ENCODE measurements at regions of chr5 and their contacts with region 1.

Region 1: GRCh38 chr5:10701567-10702039 is 59.4 kb downstream of the DAP start:
- DNase-seq: no peak
- ATAC-seq: no peak
- H3K4me3 ChIP-seq: no peak overlapping the region
- H3K27ac ChIP-seq: no peak overlapping the region
- H3K4me1 ChIP-seq: peaks cover 44% of the 10 kb centered on the region
- H3K27me3 ChIP-seq: no peaks in the 10 kb centered on the region
- CTCF ChIP-seq: peak; percentile 39 to 66 (median 53); a peak in 5 of 6 replicates
- EP300 ChIP-seq: no peak
- POLR2A ChIP-seq: no peak
- RAD21 ChIP-seq: peak; percentile 47; the same call in 1 of the 2 replicates

Region 2: GRCh38 chr5:10684303-10685086 is 17.1 kb before region 1 on chr5:
- CTCF ChIA-PET with region 1: interaction called, 20 read pairs
- POLR2A ChIA-PET with region 1: no interaction called
- RAD21 ChIA-PET with region 1: interaction called, 4 read pairs
- SMC1A ChIA-PET with region 1: interaction called, 13 read pairs
- in situ Hi-C with region 1: no loop called
- intact Hi-C with region 1: no loop called
- DNase-seq: no peak
- ATAC-seq: peak; percentile 76
- H3K4me3 ChIP-seq: 0 out of 2 replicates have a peak overlapping the region, but pooled peaks have one; percentile 17
- H3K27ac ChIP-seq: peak overlapping the region; percentile 88
- H3K4me1 ChIP-seq: peaks cover 23% of the 10 kb centered on the region
- H3K27me3 ChIP-seq: no peaks in the 10 kb centered on the region
- CTCF ChIP-seq: no peak
- EP300 ChIP-seq: no peak
- POLR2A ChIP-seq: no peak
- RAD21 ChIP-seq: no peak

Region 3: DNA sequence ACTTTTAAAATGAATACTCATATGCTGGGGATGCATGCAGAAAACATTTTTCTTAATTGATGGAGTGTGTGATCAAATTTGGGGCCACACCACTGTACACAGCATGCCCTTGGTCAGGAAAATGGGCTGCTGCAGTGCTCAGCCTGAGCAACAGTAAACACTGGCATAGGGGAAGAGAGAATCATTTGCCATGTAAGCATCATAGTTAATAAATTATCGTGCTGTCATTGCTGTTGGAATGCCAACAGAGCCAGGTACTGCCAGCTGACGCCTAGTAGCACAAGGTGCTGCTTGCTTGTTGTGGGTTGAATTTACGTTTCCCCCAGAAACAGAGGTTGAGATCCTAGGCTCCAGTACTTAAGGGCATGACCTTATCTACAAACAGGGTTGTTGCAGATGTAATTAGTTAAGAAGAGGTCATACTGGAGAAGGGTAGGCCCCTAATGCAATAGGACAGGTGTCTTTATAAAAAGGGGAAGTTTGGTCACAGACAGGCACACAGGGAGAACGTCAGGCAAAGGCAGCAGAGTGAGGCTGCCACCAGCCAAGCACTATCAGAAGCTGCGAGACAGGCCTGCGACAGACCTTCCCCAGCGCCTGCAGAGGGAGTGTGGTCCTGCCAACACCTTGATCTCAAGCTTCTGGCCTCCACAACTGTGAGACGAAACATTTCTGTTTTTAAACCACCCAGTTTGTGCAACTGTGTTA is 34.1 kb after region 1 on chr5:
- CTCF ChIA-PET with region 1: interaction called, 20 read pairs
- POLR2A ChIA-PET with region 1: no interaction called
- RAD21 ChIA-PET with region 1: interaction called, 4 read pairs
- SMC1A ChIA-PET with region 1: interaction called, 4 read pairs
- in situ Hi-C with region 1: no loop called
- intact Hi-C with region 1: no loop called
- DNase-seq: no peak
- ATAC-seq: peak; percentile 73
- H3K4me3 ChIP-seq: no peak overlapping the region
- H3K27ac ChIP-seq: no peak overlapping the region
- H3K4me1 ChIP-seq: peaks cover 12% of the 10 kb centered on the region
- H3K27me3 ChIP-seq: no peaks in the 10 kb centered on the region
- CTCF ChIP-seq: peak; percentile 6 to 14 (median 13); a peak in 1 of 6 replicates
- EP300 ChIP-seq: no peak
- POLR2A ChIP-seq: peak; percentile 22; the same call in 1 of the 2 replicates
- RAD21 ChIP-seq: 0 out of 2 replicates have a peak, but pooled peaks have one; percentile 5

Region 4: GRCh38 chr5:10768328-10768899 is 66.8 kb after region 1 on chr5:
- CTCF ChIA-PET with region 1: interaction called, 15 read pairs
- POLR2A ChIA-PET with region 1: no interaction called
- RAD21 ChIA-PET with region 1: interaction called, 4 read pairs
- SMC1A ChIA-PET with region 1: interaction called, 6 read pairs
- in situ Hi-C with region 1: no loop called
- intact Hi-C with region 1: no loop called
- DNase-seq: no peak
- ATAC-seq: no peak; the same call in 2 of the 3 replicates
- H3K4me3 ChIP-seq: no peak overlapping the region
- H3K27ac ChIP-seq: no peak overlapping the region
- H3K4me1 ChIP-seq: no peaks in the 10 kb centered on the region
- H3K27me3 ChIP-seq: no peaks in the 10 kb centered on the region; a peak in 2 of 4 replicates
- CTCF ChIP-seq: no peak
- EP300 ChIP-seq: no peak
- POLR2A ChIP-seq: no peak
- RAD21 ChIP-seq: no peak

Region 5: DNA sequence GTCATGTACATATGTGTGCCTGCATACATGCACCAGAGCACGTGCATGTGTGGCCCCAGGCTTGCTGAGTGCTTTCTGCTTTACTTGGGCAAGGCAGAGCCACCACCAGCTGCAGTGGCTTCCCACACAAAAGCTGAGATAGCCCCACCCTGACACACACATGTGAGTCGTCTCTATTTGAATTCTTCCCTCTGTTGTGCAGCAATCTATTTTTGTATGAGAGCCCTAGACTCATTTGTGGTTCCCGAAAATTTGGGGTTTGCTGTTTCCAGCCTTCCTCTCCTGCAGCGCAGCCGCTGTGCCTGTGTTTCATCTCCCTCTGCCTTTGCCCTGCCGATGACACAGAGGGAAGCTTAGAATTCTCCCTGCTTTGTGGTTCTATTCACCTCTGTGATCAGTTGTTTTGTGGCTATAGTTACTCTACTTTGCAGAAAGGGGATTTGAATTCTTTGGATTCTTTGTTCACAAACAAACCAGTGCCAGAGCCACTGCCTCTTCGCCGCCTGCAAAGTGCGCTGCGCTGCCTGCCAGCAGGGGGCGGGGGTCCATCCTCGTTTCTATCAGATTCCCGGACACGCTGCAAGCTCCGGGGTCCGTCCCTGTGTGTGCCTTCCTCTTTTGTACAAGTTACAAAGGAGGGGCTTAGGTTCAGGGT is 155.2 kb after region 1 on chr5:
- CTCF ChIA-PET with region 1: interaction called, 12 read pairs
- POLR2A ChIA-PET with region 1: no interaction called
- RAD21 ChIA-PET with region 1: no interaction called
- SMC1A ChIA-PET with region 1: interaction called, 3 read pairs
- in situ Hi-C with region 1: loop called (anchors 10 kb)
- intact Hi-C with region 1: loop called (anchors 5 kb)
- DNase-seq: no peak
- ATAC-seq: peak; percentile 68
- H3K4me3 ChIP-seq: no peak overlapping the region
- H3K27ac ChIP-seq: no peak overlapping the region
- H3K4me1 ChIP-seq: no peaks in the 10 kb centered on the region
- H3K27me3 ChIP-seq: peaks cover 4 to 6% of the 10 kb centered on the region in 2 experiments; a peak in 3 of 4 replicates
- CTCF ChIP-seq: peak; percentile 52 to 81 (median 78)
- EP300 ChIP-seq: no peak
- POLR2A ChIP-seq: no peak
- RAD21 ChIP-seq: 0 out of 2 replicates have a peak, but pooled peaks have one; percentile 22

Measured in GM12878 (cell line).